ENCODE measurements at regions of chr22 and their contacts with region 1.

Region 1: DNA sequence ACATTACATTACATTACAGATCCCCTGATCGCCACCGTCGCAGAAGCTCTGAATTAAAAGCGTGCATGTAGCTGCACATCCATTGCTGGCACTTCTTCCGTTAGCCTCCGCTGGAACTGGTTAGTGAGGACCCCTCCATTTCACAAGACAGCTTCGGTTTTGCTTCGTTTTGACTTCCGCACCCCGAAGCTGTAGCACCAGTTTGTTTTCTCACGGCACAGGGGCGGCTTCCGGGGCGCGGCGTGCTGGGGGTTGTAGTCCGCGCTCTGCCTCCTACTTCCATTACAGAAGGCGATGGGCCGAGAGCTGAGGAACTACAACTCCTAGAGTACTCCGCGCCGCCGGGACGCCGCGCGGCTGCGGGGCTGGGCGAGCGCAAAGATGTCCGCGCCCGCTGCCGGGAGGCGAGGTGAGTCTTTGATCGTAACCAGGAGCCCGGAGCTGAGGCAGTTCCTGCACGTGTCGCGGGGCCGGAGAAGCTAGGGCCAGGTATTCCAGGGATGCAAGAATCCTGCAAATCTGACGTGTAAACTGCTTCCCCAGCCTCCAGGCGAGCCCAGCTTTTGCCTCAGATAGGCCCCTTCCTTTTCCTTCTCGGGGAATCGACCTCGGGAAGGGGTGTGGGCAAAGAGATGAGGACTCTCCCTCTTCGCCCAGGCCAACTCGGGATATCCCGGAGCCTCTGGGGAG is at the start of gene PEX26:
- DNase-seq: peak; percentile 91 to 98 (median 94)
- ATAC-seq: peak; percentile 97
- H3K4me3 ChIP-seq: peak within 1 kb of the TSS; percentile 89 to 99
- H3K4me3 Mint-ChIP-seq: peak within 1 kb of the TSS; percentile 98
- H3K27ac ChIP-seq: peak within 1 kb of the TSS; percentile 78 to 91
- H3K27ac Mint-ChIP-seq: peak within 1 kb of the TSS; percentile 100
- H3K4me1 ChIP-seq: peaks cover 30% of the 10 kb centered on the region
- H3K4me1 Mint-ChIP-seq: peaks cover 55% of the 10 kb centered on the region
- H3K27me3 ChIP-seq: no peaks in the 10 kb centered on the region
- H3K27me3 Mint-ChIP-seq: no peaks in the 10 kb centered on the region
- CTCF ChIP-seq: no peak
- total RNA-seq, gene PEX26: 22.5 to 23.0 TPM

Region 2: GRCh38 chr22:17158568-17159503 is 918.9 kb before region 1 on chr22 and contains the start of gene HDHD5:
- CTCF ChIA-PET with region 1: no interaction called
- POLR2A ChIA-PET with region 1: no interaction called
- intact Hi-C with region 1: loop called in 1 of 2 experiments (anchors 5 kb)
- DNase-seq: peak; percentile 78 to 93 (median 90)
- ATAC-seq: peak; percentile 92
- H3K4me3 ChIP-seq: peak within 1 kb of the TSS; percentile 80 to 89
- H3K4me3 Mint-ChIP-seq: peak within 1 kb of the TSS; percentile 86
- H3K27ac ChIP-seq: peak within 1 kb of the TSS; percentile 56 to 64
- H3K27ac Mint-ChIP-seq: peak within 1 kb of the TSS; percentile 55
- H3K4me1 ChIP-seq: peaks cover 27% of the 10 kb centered on the region
- H3K4me1 Mint-ChIP-seq: peaks cover 36% of the 10 kb centered on the region
- H3K27me3 ChIP-seq: no peaks in the 10 kb centered on the region
- H3K27me3 Mint-ChIP-seq: no peaks in the 10 kb centered on the region
- CTCF ChIP-seq: no peak
- total RNA-seq, gene HDHD5: 9.2 to 11.0 TPM

Region 3: DNA sequence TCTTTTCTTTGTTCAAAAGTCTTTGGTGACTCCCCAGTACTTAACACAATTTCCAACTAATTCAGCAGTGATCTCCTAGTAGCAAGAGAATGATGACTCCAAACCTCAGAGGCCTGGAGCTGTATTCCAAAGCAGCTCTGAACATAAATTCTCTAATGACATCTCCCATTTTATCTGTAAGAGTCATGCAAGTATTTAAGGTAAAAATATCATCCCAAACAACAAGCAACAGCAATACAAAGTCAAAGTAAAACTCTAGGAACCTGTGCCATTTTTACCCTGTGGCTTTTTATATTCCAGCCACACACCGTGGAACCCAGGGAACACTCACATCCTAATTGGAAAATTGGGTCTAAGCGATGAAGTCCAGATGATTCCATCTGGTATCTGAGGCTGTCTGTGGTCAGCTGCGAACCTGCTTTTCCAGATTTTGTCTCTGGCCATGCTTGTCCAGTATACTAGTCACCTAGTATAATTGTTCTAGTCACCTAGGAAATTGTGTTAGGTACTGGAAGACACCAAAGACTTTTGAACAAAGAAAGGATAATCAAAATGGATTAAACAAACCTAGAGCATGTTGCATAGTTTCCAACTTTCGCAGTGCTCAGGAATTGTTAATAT is 606.8 kb before region 1 on chr22:
- CTCF ChIA-PET with region 1: no interaction called
- POLR2A ChIA-PET with region 1: no interaction called
- intact Hi-C with region 1: no loop called
- DNase-seq: no peak
- ATAC-seq: no peak
- H3K4me3 ChIP-seq: no peak overlapping the region
- H3K4me3 Mint-ChIP-seq: no peak overlapping the region
- H3K27ac ChIP-seq: no peak overlapping the region
- H3K27ac Mint-ChIP-seq: no peak overlapping the region
- H3K4me1 ChIP-seq: no peaks in the 10 kb centered on the region
- H3K4me1 Mint-ChIP-seq: no peaks in the 10 kb centered on the region
- H3K27me3 ChIP-seq: no peaks in the 10 kb centered on the region
- H3K27me3 Mint-ChIP-seq: peaks cover 23% of the 10 kb centered on the region
- CTCF ChIP-seq: no peak

Region 4: DNA sequence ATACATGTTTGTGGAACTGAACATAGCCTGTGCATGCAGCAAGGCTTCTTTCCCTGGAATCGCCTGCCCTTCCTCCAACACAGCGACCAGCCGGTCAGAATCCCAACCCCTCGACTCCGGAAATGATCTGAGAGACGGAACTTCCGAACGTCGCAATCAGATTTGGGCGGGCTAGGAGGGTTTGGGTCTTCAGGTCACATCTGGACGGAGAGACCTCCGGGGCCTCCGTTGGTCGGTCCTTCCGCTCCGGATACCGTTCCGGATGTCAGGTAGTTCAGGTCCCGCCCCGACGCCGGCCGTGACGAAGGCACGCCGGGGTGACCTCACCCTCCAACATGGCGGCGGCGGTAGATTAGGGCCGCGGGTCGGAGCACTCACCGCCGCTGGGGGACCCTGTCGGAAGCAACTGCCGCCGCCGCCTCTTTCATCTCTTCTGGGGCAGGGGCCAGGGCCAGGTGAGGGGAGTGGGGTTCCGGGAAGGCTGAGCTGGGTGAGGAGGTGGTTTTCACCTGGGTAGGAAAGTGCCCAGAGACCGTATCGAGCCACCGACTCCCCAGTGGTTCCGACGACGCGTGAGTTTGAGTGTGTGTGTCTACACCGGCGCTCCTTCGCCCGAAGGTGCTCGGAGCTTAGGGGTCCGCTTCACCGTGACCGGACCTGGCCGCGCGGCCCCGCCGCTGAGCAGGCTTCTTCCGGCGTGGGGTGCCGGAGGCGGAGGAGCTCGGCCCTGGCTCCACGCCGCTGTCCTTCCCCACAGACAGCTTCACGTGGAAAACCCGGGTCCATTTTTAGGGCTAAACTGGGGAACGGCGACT is 439.1 kb before region 1 on chr22 and contains the start of gene BCL2L13:
- CTCF ChIA-PET with region 1: no interaction called
- POLR2A ChIA-PET with region 1: no interaction called
- intact Hi-C with region 1: loop called (anchors 1 to 2 kb)
- DNase-seq: peak; percentile 73 to 93 (median 89)
- ATAC-seq: peak; percentile 92
- H3K4me3 ChIP-seq: peak within 1 kb of the TSS; percentile 67 to 90
- H3K4me3 Mint-ChIP-seq: peak within 1 kb of the TSS; percentile 92
- H3K27ac ChIP-seq: peak within 1 kb of the TSS; percentile 98 to 99
- H3K27ac Mint-ChIP-seq: peak within 1 kb of the TSS; percentile 98
- H3K4me1 ChIP-seq: peaks cover 21% of the 10 kb centered on the region
- H3K4me1 Mint-ChIP-seq: peaks cover 29% of the 10 kb centered on the region
- H3K27me3 ChIP-seq: no peaks in the 10 kb centered on the region
- H3K27me3 Mint-ChIP-seq: no peaks in the 10 kb centered on the region
- CTCF ChIP-seq: no peak
- total RNA-seq, gene BCL2L13: 7.8 to 9.5 TPM

Region 5: DNA sequence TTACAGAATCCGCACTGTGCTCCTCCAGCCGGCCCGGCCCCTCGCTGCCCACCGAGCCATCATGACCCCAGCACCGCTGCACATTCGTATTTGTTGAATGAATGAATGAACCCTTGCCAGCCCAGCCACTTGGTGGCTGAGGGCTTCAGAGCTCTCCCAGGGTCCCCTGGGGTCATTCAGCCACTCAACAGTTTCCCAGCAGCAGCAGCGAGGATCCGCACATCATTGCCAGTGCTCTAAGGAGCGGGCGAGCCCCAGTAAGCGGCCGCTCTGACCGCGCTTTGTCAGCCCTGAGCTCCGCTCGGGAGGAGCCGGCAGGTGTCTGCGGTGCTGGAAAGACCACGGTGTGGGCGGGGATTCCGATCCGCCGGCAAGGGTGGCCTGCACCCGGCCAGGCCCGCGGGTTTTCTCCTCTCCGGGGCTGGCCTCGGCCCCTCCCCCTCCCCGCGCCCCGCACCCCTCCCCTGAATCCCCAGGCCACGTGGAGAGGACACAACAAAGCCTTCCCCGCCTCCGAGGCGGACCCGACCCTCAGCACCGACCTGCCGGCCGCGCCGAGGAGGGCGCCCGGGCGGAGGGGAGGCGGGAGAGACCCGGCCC is 304.1 kb before region 1 on chr22:
- CTCF ChIA-PET with region 1: interaction called, 4 read pairs
- POLR2A ChIA-PET with region 1: interaction called, 3 read pairs
- intact Hi-C with region 1: loop called in 1 of 2 experiments (anchors 2 kb)
- DNase-seq: peak; percentile 26 to 84 (median 68)
- ATAC-seq: peak; percentile 47
- H3K4me3 ChIP-seq: peak overlapping the region; percentile 65
- H3K4me3 Mint-ChIP-seq: peak overlapping the region; percentile 90
- H3K27ac ChIP-seq: peak overlapping the region; percentile 19 to 36
- H3K27ac Mint-ChIP-seq: peak overlapping the region; percentile 90
- H3K4me1 ChIP-seq: peaks cover 76% of the 10 kb centered on the region
- H3K4me1 Mint-ChIP-seq: peaks cover 78% of the 10 kb centered on the region
- H3K27me3 ChIP-seq: no peaks in the 10 kb centered on the region
- H3K27me3 Mint-ChIP-seq: no peaks in the 10 kb centered on the region
- CTCF ChIP-seq: no peak

Region 6: DNA sequence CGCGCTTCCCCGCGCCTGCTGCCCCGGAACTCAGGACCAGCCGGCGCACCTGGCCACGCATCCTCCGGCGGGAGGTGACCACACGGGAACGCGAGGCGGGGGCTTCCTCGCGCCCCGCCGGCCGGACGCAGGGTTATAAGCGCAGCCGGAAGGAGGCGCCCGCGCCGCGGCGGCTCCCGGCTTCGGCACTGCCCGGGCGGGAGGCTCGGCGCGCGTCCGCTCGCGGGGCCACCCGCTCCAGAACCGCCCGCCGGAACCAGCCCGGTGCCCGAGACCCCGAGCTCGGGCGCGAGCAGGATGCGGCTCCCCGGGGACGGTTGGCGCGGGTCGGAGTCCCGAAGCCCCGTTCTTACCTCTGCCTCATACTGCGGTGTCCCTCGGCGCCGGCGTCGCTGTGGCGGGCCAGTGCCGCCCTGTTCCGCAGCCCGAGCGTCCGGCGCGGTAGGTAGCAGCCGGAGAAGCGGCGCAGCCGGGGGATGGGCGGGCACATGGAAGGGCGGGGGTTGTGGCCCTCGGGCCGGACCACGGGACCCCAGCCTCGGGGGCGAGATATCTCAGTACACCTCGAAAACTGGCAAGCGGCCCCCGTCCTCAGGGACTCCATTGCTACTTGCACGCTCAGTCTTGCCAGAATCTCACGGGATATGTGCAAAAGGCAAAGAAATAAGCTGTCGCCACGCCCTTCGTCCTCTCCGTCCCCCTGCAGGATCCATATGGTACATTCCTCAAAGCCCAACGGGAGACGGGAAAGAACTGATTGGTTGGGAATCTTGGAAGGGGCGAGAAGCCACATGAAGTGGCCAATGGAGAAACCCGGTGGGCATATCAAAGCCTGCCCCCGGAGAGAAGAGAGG is 76.5 kb before region 1 on chr22:
- CTCF ChIA-PET with region 1: interaction called, 4 read pairs
- POLR2A ChIA-PET with region 1: no interaction called
- intact Hi-C with region 1: loop called (anchors 1 to 2 kb)
- DNase-seq: peak in 8 of 9 experiments; percentile 34 to 88 (median 54)
- ATAC-seq: peak; percentile 40
- H3K4me3 ChIP-seq: peak overlapping the region; percentile 87 to 92
- H3K4me3 Mint-ChIP-seq: peak overlapping the region; percentile 86
- H3K27ac ChIP-seq: peak overlapping the region; percentile 53 to 79
- H3K27ac Mint-ChIP-seq: peak overlapping the region; percentile 85
- H3K4me1 ChIP-seq: peaks cover 29% of the 10 kb centered on the region
- H3K4me1 Mint-ChIP-seq: peaks cover 41% of the 10 kb centered on the region
- H3K27me3 ChIP-seq: no peaks in the 10 kb centered on the region
- H3K27me3 Mint-ChIP-seq: peaks cover 12% of the 10 kb centered on the region
- CTCF ChIP-seq: peak; percentile 31

Region 7: DNA sequence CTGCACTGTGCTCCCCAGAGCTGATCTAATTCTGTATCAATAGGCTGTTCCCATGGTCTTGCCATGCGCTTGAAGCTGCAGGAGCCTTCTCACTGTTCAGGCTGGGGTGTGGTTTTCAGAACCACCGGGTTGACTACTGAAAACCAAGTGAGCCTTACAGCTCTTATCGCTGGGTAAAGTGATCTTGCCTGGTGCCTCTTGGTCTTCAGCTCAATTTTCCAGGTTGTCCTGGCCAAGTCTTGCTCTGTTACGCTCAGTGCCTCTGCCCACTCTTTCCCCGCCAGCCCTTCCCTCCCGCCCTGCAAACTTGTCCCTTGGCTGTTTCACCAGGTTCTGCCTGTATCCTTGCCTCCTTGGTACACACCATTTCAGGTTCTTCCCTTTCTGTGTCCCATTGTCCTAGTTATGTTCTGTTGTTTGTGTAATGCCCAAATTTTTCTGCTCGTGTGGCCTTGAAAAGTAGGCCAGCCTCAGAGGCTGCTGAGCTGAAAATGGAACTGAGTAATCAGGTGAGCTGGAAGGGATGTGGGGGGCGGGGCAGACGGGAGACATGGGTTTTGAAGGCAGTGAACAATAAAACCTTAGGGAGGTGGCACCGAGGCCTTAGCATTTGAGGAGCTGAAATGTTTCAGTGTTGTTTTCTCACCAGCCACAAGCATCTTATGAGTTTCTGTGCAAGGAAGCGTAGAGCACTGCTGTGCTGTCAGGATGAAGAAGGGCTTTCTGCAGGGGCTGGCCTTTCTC is 11.2 kb after region 1 on chr22:
- CTCF ChIA-PET with region 1: interaction called, 4 read pairs
- POLR2A ChIA-PET with region 1: interaction called, 12 read pairs
- intact Hi-C with region 1: no loop called
- DNase-seq: no peak
- ATAC-seq: no peak
- H3K4me3 ChIP-seq: no peak overlapping the region
- H3K4me3 Mint-ChIP-seq: no peak overlapping the region
- H3K27ac ChIP-seq: no peak overlapping the region
- H3K27ac Mint-ChIP-seq: peak overlapping the region; percentile 69
- H3K4me1 ChIP-seq: no peaks in the 10 kb centered on the region
- H3K4me1 Mint-ChIP-seq: peaks cover 12% of the 10 kb centered on the region
- H3K27me3 ChIP-seq: no peaks in the 10 kb centered on the region
- H3K27me3 Mint-ChIP-seq: no peaks in the 10 kb centered on the region
- CTCF ChIP-seq: no peak

Region 8: GRCh38 chr22:19810351-19811201 is 1732.8 kb after region 1 on chr22:
- CTCF ChIA-PET with region 1: no interaction called
- POLR2A ChIA-PET with region 1: no interaction called
- intact Hi-C with region 1: no loop called
- DNase-seq: peak in 2 of 9 experiments; percentile 17 to 43
- ATAC-seq: no peak
- H3K4me3 ChIP-seq: no peak overlapping the region
- H3K4me3 Mint-ChIP-seq: no peak overlapping the region
- H3K27ac ChIP-seq: no peak overlapping the region
- H3K27ac Mint-ChIP-seq: no peak overlapping the region
- H3K4me1 ChIP-seq: peaks cover 13% of the 10 kb centered on the region
- H3K4me1 Mint-ChIP-seq: peaks cover 2% of the 10 kb centered on the region
- H3K27me3 ChIP-seq: no peaks in the 10 kb centered on the region
- H3K27me3 Mint-ChIP-seq: no peaks in the 10 kb centered on the region
- CTCF ChIP-seq: no peak

Measured in CD8-positive, alpha-beta T cell (primary cell).